Activated CD8-positive, alpha-beta T cell treated with anti-CD3 and anti-CD28 coated beads for 36 hours (primary cell): ENCODE measurements at regions of chr6 and their contacts with region 1.

Region 1: DNA sequence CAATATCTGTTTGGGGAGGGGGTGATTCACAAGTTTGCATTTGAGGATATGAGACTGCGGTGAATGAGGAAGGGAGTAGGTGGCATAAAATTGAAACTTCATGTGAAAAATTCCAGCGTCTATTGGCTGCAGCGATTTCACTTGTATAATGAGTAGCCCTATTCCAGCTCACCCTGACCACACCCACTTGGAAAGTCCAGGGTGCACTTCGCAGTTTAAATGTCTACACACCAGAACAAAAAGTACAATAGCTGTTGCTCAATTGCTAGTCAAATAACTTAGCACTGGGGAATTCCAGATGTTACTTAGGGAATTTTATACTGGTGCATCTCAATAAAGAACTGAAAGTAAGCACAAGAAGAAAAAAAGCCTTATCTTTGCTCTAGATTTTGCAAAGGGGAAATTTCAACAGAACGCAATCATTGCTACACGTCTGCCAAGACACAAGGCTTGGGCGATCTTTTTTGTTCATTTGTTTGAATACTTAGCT is 6.3 kb downstream of the TNFAIP3 start:
- DNase-seq: peak; percentile 94
- ATAC-seq: peak; percentile 60
- H3K4me3 Mint-ChIP-seq: peak overlapping the region; percentile 98
- H3K27ac Mint-ChIP-seq: peak overlapping the region; percentile 95
- H3K4me1 Mint-ChIP-seq: peaks cover 54% of the 10 kb centered on the region
- H3K27me3 Mint-ChIP-seq: no peaks in the 10 kb centered on the region
- CTCF ChIP-seq: no peak

Region 2: GRCh38 chr6:137102851-137103492 is 770.3 kb before region 1 on chr6:
- CTCF ChIA-PET with region 1: no interaction called
- POLR2A ChIA-PET with region 1: no interaction called
- intact Hi-C with region 1: no loop called
- DNase-seq: peak; percentile 58
- ATAC-seq: peak; percentile 87
- H3K4me3 Mint-ChIP-seq: no peak overlapping the region
- H3K27ac Mint-ChIP-seq: peak overlapping the region; percentile 47
- H3K4me1 Mint-ChIP-seq: peaks cover 20% of the 10 kb centered on the region
- H3K27me3 Mint-ChIP-seq: no peaks in the 10 kb centered on the region
- CTCF ChIP-seq: no peak

Region 3: DNA sequence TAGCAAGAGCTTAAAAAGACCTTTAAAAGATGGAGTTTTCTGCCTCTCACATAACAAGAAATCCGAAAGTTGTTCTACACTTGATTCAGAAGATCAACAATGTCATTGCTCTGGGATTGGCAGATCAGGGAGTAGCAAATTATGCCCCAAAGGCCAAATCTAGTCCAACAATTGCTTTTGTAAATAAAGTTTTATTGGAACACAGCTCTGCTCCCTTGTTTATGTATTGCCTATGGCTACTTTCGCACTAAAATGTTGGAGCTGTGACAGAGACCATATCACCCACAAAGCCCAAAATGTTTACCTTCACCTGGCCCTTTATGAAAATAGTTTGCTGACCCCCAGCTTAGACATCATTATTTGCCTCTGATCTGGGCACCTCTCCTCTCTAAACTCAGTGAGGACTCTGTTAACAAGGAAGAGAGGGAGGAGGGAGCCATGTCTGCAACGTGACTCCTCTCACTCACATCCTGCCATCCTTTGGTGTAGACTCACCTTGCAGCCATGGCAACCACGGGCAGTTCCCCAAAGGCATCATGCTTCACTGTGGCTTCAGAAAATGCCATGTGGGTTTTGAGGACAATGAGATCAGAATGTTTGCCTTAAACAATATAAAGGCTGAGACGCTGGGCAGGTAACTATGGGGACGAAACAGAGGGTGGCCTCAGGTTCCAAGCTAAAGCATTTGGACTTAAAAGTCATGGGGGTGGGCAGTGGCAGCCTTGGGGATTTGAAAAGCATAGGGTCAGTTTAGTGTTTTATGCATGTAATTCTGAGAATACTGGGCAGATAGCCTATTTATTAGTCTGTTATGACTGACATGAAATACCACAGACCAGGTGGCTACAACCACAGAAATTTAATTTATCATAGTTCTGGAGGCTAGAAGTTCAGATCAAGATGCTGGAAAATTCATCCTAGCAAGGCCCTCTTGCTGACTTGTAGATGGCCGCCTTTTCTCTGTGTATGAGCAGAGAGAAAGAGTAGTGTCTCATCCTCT is 155.9 kb before region 1 on chr6:
- CTCF ChIA-PET with region 1: interaction called, 37 read pairs
- POLR2A ChIA-PET with region 1: interaction called, 12 read pairs
- intact Hi-C with region 1: no loop called
- DNase-seq: peak; percentile 94
- ATAC-seq: peak; percentile 85
- H3K4me3 Mint-ChIP-seq: peak overlapping the region; percentile 13
- H3K27ac Mint-ChIP-seq: peak overlapping the region; percentile 92
- H3K4me1 Mint-ChIP-seq: peaks cover 45% of the 10 kb centered on the region
- H3K27me3 Mint-ChIP-seq: no peaks in the 10 kb centered on the region
- CTCF ChIP-seq: no peak

Region 4: GRCh38 chr6:137823826-137824555 is 49.3 kb before region 1 on chr6:
- CTCF ChIA-PET with region 1: interaction called, 16 read pairs
- POLR2A ChIA-PET with region 1: interaction called, 7 read pairs
- intact Hi-C with region 1: no loop called
- DNase-seq: peak; percentile 85
- ATAC-seq: peak; percentile 44
- H3K4me3 Mint-ChIP-seq: peak overlapping the region; percentile 60
- H3K27ac Mint-ChIP-seq: peak overlapping the region; percentile 93
- H3K4me1 Mint-ChIP-seq: peaks cover 86% of the 10 kb centered on the region
- H3K27me3 Mint-ChIP-seq: no peaks in the 10 kb centered on the region
- CTCF ChIP-seq: no peak

Region 5: DNA sequence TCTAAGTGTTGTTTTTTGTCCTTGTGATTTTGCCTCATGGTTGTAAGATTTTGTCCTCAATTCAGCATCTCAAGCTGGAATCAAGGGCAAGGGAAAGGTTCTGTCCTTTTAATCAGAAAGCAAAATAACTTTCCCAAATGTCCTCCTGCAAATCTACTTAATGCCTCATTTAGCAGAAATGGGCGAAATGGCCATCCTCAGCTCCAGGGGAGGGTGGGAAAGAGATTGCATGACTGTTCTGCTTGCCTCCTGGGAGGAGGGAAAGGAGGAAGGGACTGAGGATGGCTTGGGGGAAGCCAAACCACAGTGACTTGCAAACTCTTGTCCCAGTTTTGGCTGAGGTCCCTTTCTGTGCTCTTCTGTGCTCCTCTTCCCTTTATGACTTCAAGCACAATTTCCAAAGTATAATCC is 37.1 kb after region 1 on chr6:
- CTCF ChIA-PET with region 1: interaction called, 10 read pairs
- POLR2A ChIA-PET with region 1: interaction called, 3 read pairs
- intact Hi-C with region 1: loop called (anchors 2 kb)
- DNase-seq: no peak
- ATAC-seq: no peak
- H3K4me3 Mint-ChIP-seq: no peak overlapping the region
- H3K27ac Mint-ChIP-seq: peak overlapping the region; percentile 60
- H3K4me1 Mint-ChIP-seq: peaks cover 55% of the 10 kb centered on the region
- H3K27me3 Mint-ChIP-seq: no peaks in the 10 kb centered on the region
- CTCF ChIP-seq: no peak

Region 6: DNA sequence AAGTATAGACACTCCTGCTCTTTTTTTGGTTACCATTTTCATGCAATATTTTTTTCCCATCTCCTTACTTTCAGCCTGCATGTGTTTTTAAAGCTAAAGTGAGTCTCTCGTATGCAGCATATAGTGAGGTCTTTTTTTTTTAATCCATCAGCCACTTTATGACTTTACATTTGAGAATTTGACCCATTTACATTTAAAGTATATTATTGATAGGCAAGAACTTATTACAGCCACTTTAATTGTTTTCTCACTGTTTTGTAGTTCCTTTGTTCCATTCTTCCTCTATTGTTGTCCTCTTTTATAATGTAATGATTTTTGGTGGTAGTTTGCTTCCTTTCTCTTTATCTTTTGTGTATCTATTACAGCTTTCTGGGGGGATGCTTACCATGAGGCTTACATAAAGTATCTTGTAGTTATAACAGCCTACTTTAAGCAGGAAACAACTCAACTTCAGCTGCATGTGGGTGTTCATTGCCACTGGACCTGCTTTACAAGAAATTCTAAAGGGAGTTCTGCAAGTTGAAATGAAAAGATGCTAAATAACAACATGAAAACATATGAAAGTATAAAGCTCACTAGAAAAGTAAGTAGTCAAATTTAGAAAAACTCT is 65.6 kb after region 1 on chr6:
- CTCF ChIA-PET with region 1: interaction called, 360 read pairs
- POLR2A ChIA-PET with region 1: interaction called, 17 read pairs
- intact Hi-C with region 1: loop called (anchors 2 kb)
- DNase-seq: no peak
- ATAC-seq: no peak
- H3K4me3 Mint-ChIP-seq: peak overlapping the region; percentile 39
- H3K27ac Mint-ChIP-seq: peak overlapping the region; percentile 92
- H3K4me1 Mint-ChIP-seq: peaks cover 44% of the 10 kb centered on the region
- H3K27me3 Mint-ChIP-seq: no peaks in the 10 kb centered on the region
- CTCF ChIP-seq: no peak

Region 7: GRCh38 chr6:137975188-137975940 is 102.0 kb after region 1 on chr6:
- CTCF ChIA-PET with region 1: interaction called, 80 read pairs
- POLR2A ChIA-PET with region 1: interaction called, 8 read pairs
- intact Hi-C with region 1: loop called (anchors 2 kb)
- DNase-seq: peak; percentile 64
- ATAC-seq: peak; percentile 69
- H3K4me3 Mint-ChIP-seq: peak overlapping the region; percentile 70
- H3K27ac Mint-ChIP-seq: peak overlapping the region; percentile 94
- H3K4me1 Mint-ChIP-seq: peaks cover 70% of the 10 kb centered on the region
- H3K27me3 Mint-ChIP-seq: no peaks in the 10 kb centered on the region
- CTCF ChIP-seq: peak; percentile 82

Region 8: GRCh38 chr6:138194287-138194686 is 321.0 kb after region 1 on chr6:
- CTCF ChIA-PET with region 1: no interaction called
- POLR2A ChIA-PET with region 1: no interaction called
- intact Hi-C with region 1: no loop called
- DNase-seq: no peak
- ATAC-seq: no peak
- H3K4me3 Mint-ChIP-seq: no peak overlapping the region
- H3K27ac Mint-ChIP-seq: no peak overlapping the region
- H3K4me1 Mint-ChIP-seq: no peaks in the 10 kb centered on the region
- H3K27me3 Mint-ChIP-seq: peaks cover 16% of the 10 kb centered on the region
- CTCF ChIP-seq: no peak